ENCODE measurements at regions of chrX and their contacts with region 1.

Region 1: GRCh38 chrX:41384041-41384705 is 50.2 kb downstream of the DDX3X start:
- DNase-seq: peak; percentile 81
- H3K4me3 Mint-ChIP-seq: peak overlapping the region; percentile 49
- H3K27ac Mint-ChIP-seq: peak overlapping the region; percentile 98
- H3K4me1 Mint-ChIP-seq: peaks cover 36% of the 10 kb centered on the region
- H3K27me3 Mint-ChIP-seq: no peaks in the 10 kb centered on the region

Region 2: DNA sequence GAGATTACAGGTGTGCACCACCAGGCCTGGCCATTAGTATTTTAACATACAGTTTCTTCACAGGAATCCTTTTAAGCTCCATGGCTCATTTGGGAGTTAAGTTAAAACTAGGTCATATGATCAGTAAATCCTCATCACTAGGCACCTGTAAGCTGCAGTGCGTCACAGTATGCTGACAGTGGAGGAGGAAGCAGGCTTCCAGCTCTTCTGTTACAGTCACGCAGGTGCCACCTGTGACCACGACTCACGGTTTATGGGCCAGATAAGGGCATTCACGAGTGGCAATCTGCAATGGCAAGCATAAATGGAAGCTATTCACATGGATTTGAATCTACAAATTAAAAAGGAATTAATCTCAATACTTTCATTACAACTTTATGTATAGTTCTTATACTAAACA is 1157.0 kb before region 1 on chrX:
- CTCF ChIA-PET with region 1: no interaction called
- POLR2A ChIA-PET with region 1: no interaction called
- intact Hi-C with region 1: no loop called
- DNase-seq: no peak
- H3K4me3 Mint-ChIP-seq: no peak overlapping the region
- H3K27ac Mint-ChIP-seq: no peak overlapping the region
- H3K4me1 Mint-ChIP-seq: no peaks in the 10 kb centered on the region
- H3K27me3 Mint-ChIP-seq: no peaks in the 10 kb centered on the region

Region 3: GRCh38 chrX:41265615-41266014 is 118.6 kb before region 1 on chrX:
- CTCF ChIA-PET with region 1: no interaction called
- POLR2A ChIA-PET with region 1: no interaction called
- intact Hi-C with region 1: loop called (anchors 1 kb)
- DNase-seq: peak; percentile 82
- H3K4me3 Mint-ChIP-seq: no peak overlapping the region
- H3K27ac Mint-ChIP-seq: peak overlapping the region; percentile 45
- H3K4me1 Mint-ChIP-seq: peaks cover 3% of the 10 kb centered on the region
- H3K27me3 Mint-ChIP-seq: no peaks in the 10 kb centered on the region

Region 4: DNA sequence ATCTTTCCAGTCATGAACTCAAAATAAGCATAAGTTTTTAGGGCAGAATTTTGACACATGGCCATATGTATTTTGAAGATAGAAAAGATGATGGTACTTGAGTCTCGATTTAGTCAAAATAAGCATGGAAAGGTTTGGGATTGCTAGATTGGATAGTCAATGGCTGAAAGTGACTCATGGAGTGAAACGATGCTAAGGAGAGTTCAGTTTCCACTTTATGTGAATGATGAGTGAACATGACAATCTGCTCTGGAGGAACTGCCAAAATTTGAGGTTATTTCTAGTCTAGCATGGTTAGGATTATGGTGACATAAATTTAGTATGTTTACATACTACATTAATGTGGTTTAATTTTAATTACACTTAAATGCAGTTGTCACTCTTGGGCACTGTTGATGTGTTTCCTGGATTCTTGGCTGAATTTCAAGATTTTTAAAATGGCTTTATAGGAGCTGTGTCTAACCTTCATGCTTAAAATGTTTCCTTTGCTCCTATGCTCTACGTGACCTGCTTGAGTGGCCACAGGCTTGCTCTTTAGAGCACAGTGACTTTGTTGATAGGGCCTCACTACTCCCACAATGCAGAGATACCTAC is 33.1 kb before region 1 on chrX:
- CTCF ChIA-PET with region 1: no interaction called
- POLR2A ChIA-PET with region 1: interaction called, 3 read pairs
- intact Hi-C with region 1: loop called (anchors 2 kb)
- DNase-seq: no peak
- H3K4me3 Mint-ChIP-seq: peak overlapping the region; percentile 12
- H3K27ac Mint-ChIP-seq: peak overlapping the region; percentile 71
- H3K4me1 Mint-ChIP-seq: peaks cover 49% of the 10 kb centered on the region
- H3K27me3 Mint-ChIP-seq: no peaks in the 10 kb centered on the region

Measured in activated CD4-positive, alpha-beta memory T cell treated with anti-CD3 and anti-CD28 coated beads for 36 hours (primary cell).